Left ventricle myocardium superior (tissue), 1 donor: ENCODE measurements at regions of chr12 and their contacts with region 1.

Region 1: GRCh38 chr12:50174971-50175715 is 8.0 kb upstream of the CERS5 start:
- DNase-seq: no peak
- ATAC-seq: peak; percentile 30

Region 2: GRCh38 chr12:50084775-50085614 is 90.1 kb before region 1 on chr12 and contains the start of gene SMARCD1:
- intact Hi-C with region 1: loop called (anchors 5 kb)
- DNase-seq: peak; percentile 95
- ATAC-seq: peak; percentile 96
- total RNA-seq, gene SMARCD1: 17.2 TPM

Region 3: DNA sequence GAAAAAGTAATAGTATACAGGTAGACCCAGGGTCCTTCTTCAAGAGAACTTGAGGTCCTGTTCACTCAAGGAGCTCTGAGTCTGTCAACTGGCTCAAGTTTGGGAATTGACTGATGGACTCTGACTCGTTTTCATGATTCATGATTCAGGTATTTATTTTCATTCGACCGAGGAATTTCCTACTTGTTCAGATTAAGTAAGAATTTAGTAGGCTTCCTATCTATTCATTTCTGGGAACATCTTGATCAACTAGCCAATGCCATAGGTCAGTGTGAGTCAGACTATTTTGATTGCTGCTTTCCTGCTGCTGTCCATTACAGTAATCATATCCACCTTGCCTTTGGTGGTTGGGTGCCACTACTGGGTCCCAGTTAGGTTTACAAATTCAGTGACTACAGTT is 215.1 kb after region 1 on chr12:
- intact Hi-C with region 1: no loop called
- DNase-seq: no peak
- ATAC-seq: no peak

Region 4: DNA sequence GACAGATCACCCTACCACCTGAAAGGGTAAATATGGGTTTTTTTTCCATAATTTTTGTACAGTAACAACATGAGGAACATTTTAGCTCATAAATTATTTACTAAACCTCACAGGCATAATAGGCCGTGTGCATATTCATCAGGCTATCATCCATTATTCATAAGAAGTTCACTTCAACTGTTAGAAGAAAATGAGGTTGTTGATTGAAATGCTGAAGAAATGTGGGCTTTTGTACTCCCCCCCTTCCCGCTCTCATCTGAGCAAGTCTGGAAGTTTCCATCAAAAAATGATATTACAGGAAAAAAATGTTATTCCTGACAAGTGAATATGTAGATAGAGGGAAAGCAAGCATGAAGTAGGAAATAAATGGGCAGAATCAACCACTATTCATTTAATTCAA is 1050.6 kb after region 1 on chr12:
- intact Hi-C with region 1: no loop called
- DNase-seq: no peak
- ATAC-seq: no peak